GM12878 (cell line): ENCODE measurements at regions of chr15 and their contacts with region 1.

Region 1: GRCh38 chr15:59917504-59918157 is 86.5 kb upstream of the FOXB1 start:
- DNase-seq: peak; percentile 8
- ATAC-seq: peak; percentile 94
- H3K4me3 ChIP-seq: no peak overlapping the region
- H3K27ac ChIP-seq: no peak overlapping the region
- H3K4me1 ChIP-seq: peaks cover 10% of the 10 kb centered on the region
- H3K27me3 ChIP-seq: no peaks in the 10 kb centered on the region; a peak in 1 of 4 replicates
- CTCF ChIP-seq: peak; percentile 71 to 76 (median 73)
- EP300 ChIP-seq: no peak
- POLR2A ChIP-seq: no peak
- RAD21 ChIP-seq: peak; percentile 77

Region 2: DNA sequence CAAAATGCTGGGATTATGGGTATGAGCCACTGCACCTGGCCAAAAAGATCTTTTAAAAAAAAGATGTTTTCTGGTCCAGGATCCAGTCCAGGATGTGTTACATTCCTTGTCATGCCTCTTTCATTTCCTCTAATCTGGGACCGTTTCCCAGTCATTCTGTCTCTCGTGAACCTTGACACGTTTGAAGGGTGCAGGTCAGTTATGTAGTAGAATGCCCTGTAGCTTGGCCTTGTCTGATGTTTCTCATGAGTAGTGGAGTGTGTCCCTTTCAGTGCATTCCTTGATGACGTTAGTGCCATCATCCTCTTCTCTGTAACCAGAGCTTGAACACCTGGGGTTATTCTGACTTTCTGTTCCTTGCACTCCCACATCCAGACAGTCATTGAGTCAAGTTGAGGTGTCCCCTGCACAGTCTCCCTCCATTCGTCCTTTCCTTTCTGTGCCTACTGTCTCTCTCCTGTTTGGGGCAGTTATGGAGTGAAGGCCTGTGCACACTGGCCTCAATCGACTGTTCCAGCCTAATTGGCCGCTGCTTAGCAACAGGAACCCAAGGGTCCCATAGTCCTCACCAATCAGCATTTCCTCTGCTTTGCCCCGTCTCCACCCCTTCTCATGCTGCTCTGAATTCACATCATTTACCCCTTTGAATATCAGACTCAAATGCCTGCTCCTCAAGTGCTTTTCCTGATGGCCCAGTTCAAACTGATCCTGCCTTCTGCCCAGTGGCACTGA is 474.1 kb before region 1 on chr15:
- CTCF ChIA-PET with region 1: no interaction called
- POLR2A ChIA-PET with region 1: no interaction called
- RAD21 ChIA-PET with region 1: no interaction called
- SMC1A ChIA-PET with region 1: no interaction called
- in situ Hi-C with region 1: no loop called
- intact Hi-C with region 1: no loop called
- DNase-seq: peak; percentile 31
- ATAC-seq: peak; percentile 82
- H3K4me3 ChIP-seq: no peak overlapping the region
- H3K27ac ChIP-seq: no peak overlapping the region
- H3K4me1 ChIP-seq: peaks cover 24% of the 10 kb centered on the region
- H3K27me3 ChIP-seq: no peaks in the 10 kb centered on the region
- CTCF ChIP-seq: no peak
- EP300 ChIP-seq: no peak
- POLR2A ChIP-seq: no peak
- RAD21 ChIP-seq: no peak

Region 3: DNA sequence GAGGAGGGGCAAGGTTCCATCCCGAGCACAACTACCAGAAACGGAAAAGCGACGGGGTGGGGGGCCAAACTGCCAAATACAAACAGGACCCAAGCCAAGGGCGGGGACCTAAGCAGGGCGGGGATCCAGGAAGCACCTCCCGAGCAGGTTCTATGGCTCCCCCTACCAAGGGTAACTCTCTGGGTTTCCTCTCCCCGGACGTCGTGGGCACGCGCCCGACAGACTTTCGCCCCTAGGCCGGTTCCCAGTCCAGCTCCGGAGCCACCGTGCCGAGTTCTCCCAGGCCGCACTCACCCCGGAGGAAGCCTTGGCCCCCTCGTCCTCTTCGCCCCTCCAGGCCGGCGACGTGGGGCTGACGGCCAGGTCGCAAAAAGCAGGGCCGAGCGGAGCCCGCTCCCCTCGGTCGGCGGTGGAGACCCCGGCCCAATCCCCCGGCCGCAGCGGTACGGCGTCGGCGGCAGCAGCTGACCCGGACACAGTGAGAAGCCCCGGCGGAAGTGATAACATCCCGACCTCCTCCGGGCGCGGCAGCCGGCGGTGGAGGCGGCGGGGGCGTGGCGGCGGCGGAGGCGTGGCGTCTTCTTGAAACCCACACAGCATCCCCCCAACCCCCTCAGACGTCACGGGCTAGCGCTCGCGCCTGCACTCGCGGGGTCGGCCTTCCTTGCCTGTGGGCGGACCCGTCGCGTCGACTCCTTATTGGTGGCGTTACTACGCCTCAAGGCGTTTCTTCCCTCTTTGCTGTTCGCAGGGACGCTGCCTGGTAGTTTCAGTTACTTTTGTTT is 228.6 kb before region 1 on chr15 and contains the start of gene BNIP2:
- CTCF ChIA-PET with region 1: interaction called, 10 read pairs
- POLR2A ChIA-PET with region 1: no interaction called
- RAD21 ChIA-PET with region 1: no interaction called
- SMC1A ChIA-PET with region 1: no interaction called
- in situ Hi-C with region 1: no loop called
- intact Hi-C with region 1: no loop called
- DNase-seq: peak; percentile 92
- ATAC-seq: peak; percentile 91
- H3K4me3 ChIP-seq: peak within 1 kb of the TSS; percentile 94
- H3K27ac ChIP-seq: peak within 1 kb of the TSS; percentile 98
- H3K4me1 ChIP-seq: peaks cover 9% of the 10 kb centered on the region
- H3K27me3 ChIP-seq: no peaks in the 10 kb centered on the region
- CTCF ChIP-seq: no peak
- EP300 ChIP-seq: no peak
- POLR2A ChIP-seq: peak; percentile 90
- RAD21 ChIP-seq: no peak
- polyA plus RNA-seq, gene BNIP2: 29.9 to 58.5 TPM

Region 4: GRCh38 chr15:60065951-60066350 is 148.3 kb after region 1 on chr15:
- CTCF ChIA-PET with region 1: no interaction called
- POLR2A ChIA-PET with region 1: no interaction called
- RAD21 ChIA-PET with region 1: no interaction called
- SMC1A ChIA-PET with region 1: no interaction called
- in situ Hi-C with region 1: no loop called
- intact Hi-C with region 1: no loop called
- DNase-seq: no peak
- ATAC-seq: no peak
- H3K4me3 ChIP-seq: no peak overlapping the region
- H3K27ac ChIP-seq: no peak overlapping the region
- H3K4me1 ChIP-seq: no peaks in the 10 kb centered on the region
- H3K27me3 ChIP-seq: peaks cover 0 to under 1% of the 10 kb centered on the region in 2 experiments; a peak in 2 of 4 replicates
- CTCF ChIP-seq: no peak
- EP300 ChIP-seq: no peak
- POLR2A ChIP-seq: no peak
- RAD21 ChIP-seq: no peak

Region 5: GRCh38 chr15:60128000-60128376 is 210.4 kb after region 1 on chr15:
- CTCF ChIA-PET with region 1: interaction called, 4 read pairs
- POLR2A ChIA-PET with region 1: no interaction called
- RAD21 ChIA-PET with region 1: no interaction called
- SMC1A ChIA-PET with region 1: interaction called, 4 read pairs
- in situ Hi-C with region 1: no loop called
- intact Hi-C with region 1: loop called (anchors 5 kb)
- DNase-seq: no peak
- ATAC-seq: no peak
- H3K4me3 ChIP-seq: peak overlapping the region; percentile 66
- H3K27ac ChIP-seq: peak overlapping the region; percentile 37; the same call in 1 of the 2 replicates
- H3K4me1 ChIP-seq: peaks cover 23% of the 10 kb centered on the region
- H3K27me3 ChIP-seq: no peaks in the 10 kb centered on the region
- CTCF ChIP-seq: no peak
- EP300 ChIP-seq: no peak
- POLR2A ChIP-seq: no peak
- RAD21 ChIP-seq: no peak

Region 6: DNA sequence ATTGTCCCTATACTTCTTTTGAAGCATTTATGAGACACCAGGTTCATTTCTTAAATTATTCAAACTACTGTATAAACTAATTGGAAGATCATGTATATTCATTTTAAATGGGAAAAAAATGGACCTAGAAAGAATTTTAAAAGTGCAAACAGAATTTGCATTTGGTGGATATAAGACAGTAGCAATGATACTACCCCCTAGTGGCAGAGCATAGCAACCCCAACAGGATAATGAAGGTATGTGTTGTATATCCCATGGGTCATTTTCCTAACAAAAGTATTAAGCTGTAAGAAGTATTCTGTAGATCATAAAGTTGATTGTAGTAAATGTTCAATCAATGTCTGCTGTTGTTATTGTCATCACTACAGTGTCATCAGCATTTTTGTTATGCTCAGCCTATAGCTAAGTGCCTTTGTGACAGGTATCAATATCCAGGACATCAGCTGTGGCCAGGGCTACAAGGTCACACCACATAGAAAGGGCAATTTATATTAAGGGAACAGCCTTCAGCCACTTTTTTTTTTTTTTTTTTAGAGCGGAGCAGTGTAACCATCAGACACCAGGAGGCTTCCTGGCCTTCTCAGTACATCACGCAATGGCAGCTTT is 262.3 kb after region 1 on chr15:
- CTCF ChIA-PET with region 1: interaction called, 59 read pairs
- POLR2A ChIA-PET with region 1: no interaction called
- RAD21 ChIA-PET with region 1: interaction called, 10 read pairs
- SMC1A ChIA-PET with region 1: interaction called, 10 read pairs
- in situ Hi-C with region 1: loop called (anchors 25 kb)
- intact Hi-C with region 1: loop called (anchors 1 kb)
- DNase-seq: peak; percentile 3
- ATAC-seq: peak; percentile 68
- H3K4me3 ChIP-seq: no peak overlapping the region
- H3K27ac ChIP-seq: no peak overlapping the region
- H3K4me1 ChIP-seq: no peaks in the 10 kb centered on the region
- H3K27me3 ChIP-seq: peaks cover 0 to 4% of the 10 kb centered on the region in 2 experiments; a peak in 1 of 4 replicates
- CTCF ChIP-seq: peak; percentile 73 to 80 (median 77)
- EP300 ChIP-seq: no peak
- POLR2A ChIP-seq: no peak
- RAD21 ChIP-seq: peak; percentile 80